Caco-2 (cell line): ENCODE measurements at regions of chr22 and their contacts with region 1.

Region 1: GRCh38 chr22:45192701-45193187 is 29.0 kb downstream of the NUP50 start:
- DNase-seq: peak in 1 of 2 experiments; percentile 64
- H3K4me3 ChIP-seq: no peak overlapping the region
- H3K4me3 Mint-ChIP-seq: no peak overlapping the region
- H3K27ac Mint-ChIP-seq: no peak overlapping the region
- H3K4me1 ChIP-seq: peaks cover 12% of the 10 kb centered on the region
- H3K4me1 Mint-ChIP-seq: peaks cover 18% of the 10 kb centered on the region
- H3K27me3 ChIP-seq: no peaks in the 10 kb centered on the region
- H3K27me3 Mint-ChIP-seq: no peaks in the 10 kb centered on the region
- CTCF ChIP-seq: peak in 1 of 2 experiments; percentile 42

Region 2: DNA sequence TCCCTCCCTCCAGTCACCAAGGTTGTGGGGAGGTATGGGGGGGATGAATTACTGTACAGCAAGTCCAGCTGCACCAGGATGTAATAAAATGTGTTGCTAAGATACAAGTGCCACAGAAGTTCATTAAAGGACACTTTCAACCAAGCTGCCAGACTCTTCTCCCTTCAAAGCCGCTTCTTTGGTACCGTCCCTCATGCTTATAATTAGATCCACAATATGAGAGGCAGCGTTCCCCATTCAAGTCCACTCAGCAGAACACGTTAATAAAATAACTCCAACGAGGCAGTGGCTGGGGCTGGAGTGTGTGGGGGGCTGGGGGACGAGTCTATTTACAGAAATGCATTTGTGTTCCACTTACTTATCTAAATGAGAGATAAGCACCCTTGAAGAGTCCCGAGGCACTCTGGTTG is 197.6 kb before region 1 on chr22:
- CTCF ChIA-PET with region 1: no interaction called
- POLR2A ChIA-PET with region 1: no interaction called
- intact Hi-C with region 1: no loop called
- DNase-seq: no peak
- H3K4me3 ChIP-seq: no peak overlapping the region
- H3K4me3 Mint-ChIP-seq: no peak overlapping the region
- H3K27ac Mint-ChIP-seq: no peak overlapping the region
- H3K4me1 ChIP-seq: no peaks in the 10 kb centered on the region
- H3K4me1 Mint-ChIP-seq: no peaks in the 10 kb centered on the region
- H3K27me3 ChIP-seq: peaks cover 4% of the 10 kb centered on the region
- H3K27me3 Mint-ChIP-seq: peaks cover 38% of the 10 kb centered on the region
- CTCF ChIP-seq: no peak

Region 3: DNA sequence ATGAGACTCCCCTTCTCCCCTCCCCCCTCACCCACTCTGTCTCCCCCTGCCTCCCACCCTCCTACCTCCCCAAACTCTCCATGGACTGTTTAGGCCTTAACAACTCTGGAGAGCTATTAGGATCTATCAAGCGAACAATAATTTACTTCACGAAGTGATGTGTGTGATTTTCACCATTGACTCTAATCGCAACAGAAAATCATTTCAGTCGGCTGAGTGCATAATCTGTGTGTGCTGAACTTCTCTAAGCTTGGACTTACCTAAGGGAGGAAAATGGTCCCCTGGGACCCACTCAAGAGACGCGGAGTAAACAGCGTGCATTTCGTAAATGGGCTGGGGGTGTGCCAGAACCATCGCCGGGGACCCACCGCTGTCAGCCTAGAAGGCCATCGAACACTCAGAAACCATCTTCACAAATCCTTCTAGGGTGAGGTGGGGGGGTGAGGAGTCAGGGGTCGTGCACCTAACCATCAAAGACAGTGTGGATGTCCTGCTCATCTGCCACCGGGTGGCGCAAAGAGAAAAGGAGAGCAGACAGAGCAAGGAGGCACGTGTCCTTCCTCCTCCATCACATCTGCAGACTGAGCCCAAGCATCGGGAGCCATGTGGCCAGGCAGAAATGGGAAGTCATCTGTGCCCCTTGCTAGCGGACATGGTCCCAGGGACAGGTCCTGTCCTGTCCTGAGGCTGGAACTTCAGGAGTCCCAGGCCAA is 91.1 kb before region 1 on chr22:
- CTCF ChIA-PET with region 1: no interaction called
- POLR2A ChIA-PET with region 1: no interaction called
- intact Hi-C with region 1: loop called (anchors 10 kb)
- DNase-seq: peak; percentile 75
- H3K4me3 ChIP-seq: no peak overlapping the region
- H3K4me3 Mint-ChIP-seq: no peak overlapping the region
- H3K27ac Mint-ChIP-seq: no peak overlapping the region
- H3K4me1 ChIP-seq: no peaks in the 10 kb centered on the region
- H3K4me1 Mint-ChIP-seq: peaks cover 15% of the 10 kb centered on the region
- H3K27me3 ChIP-seq: no peaks in the 10 kb centered on the region
- H3K27me3 Mint-ChIP-seq: no peaks in the 10 kb centered on the region
- CTCF ChIP-seq: peak; percentile 63 to 73

Region 4: DNA sequence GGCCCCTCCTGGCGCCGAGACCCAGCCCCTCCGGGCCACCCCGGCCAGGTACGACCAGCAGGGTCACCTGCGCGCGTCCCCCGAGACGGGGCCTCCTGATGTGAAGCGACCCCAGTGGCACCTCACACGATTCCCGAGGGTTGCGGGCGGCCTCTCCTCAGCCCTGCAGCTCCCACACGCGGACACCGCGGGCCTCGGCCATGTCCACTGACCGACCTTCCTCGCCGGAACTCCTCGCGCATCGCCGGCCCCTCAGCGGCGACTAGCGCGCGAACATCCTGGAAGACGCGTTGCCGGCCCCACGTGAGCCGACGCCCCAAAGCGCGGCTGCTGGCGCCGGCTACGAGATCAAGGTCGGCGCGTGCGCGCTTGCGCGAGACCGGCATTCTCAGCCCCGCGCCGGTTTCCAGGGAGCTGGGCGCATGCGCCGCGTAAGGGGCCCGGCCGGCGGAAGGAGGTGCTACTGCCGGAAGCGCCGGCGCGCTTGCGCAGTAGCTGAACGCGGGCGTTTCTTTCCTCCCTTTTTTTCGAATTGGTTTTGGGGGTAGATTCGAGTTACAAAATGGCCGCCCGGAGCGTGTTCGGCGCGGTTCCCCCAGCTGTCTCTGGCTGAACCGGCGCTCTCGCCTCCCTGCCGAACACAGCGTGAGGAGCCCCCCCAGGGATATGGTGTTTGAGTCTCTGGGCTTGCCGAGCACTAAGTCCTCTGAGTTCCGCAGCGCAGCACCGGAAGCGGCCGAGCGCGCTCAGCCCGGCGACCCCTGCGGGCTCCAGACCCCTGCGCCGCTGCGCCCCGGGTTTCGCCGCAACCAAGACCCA is 29.1 kb before region 1 on chr22 and contains the start of gene NUP50:
- CTCF ChIA-PET with region 1: interaction called, 3 read pairs
- POLR2A ChIA-PET with region 1: interaction called, 10 read pairs
- intact Hi-C with region 1: no loop called
- DNase-seq: peak; percentile 95 to 98
- H3K4me3 ChIP-seq: peak within 1 kb of the TSS; percentile 78
- H3K4me3 Mint-ChIP-seq: peak within 1 kb of the TSS; percentile 100
- H3K27ac Mint-ChIP-seq: peak within 1 kb of the TSS; percentile 97
- H3K4me1 ChIP-seq: peaks cover 47% of the 10 kb centered on the region
- H3K4me1 Mint-ChIP-seq: peaks cover 38% of the 10 kb centered on the region
- H3K27me3 ChIP-seq: no peaks in the 10 kb centered on the region
- H3K27me3 Mint-ChIP-seq: no peaks in the 10 kb centered on the region
- CTCF ChIP-seq: no peak
- total RNA-seq, gene NUP50: 122 and 128 TPM in 2 replicates

Region 5: DNA sequence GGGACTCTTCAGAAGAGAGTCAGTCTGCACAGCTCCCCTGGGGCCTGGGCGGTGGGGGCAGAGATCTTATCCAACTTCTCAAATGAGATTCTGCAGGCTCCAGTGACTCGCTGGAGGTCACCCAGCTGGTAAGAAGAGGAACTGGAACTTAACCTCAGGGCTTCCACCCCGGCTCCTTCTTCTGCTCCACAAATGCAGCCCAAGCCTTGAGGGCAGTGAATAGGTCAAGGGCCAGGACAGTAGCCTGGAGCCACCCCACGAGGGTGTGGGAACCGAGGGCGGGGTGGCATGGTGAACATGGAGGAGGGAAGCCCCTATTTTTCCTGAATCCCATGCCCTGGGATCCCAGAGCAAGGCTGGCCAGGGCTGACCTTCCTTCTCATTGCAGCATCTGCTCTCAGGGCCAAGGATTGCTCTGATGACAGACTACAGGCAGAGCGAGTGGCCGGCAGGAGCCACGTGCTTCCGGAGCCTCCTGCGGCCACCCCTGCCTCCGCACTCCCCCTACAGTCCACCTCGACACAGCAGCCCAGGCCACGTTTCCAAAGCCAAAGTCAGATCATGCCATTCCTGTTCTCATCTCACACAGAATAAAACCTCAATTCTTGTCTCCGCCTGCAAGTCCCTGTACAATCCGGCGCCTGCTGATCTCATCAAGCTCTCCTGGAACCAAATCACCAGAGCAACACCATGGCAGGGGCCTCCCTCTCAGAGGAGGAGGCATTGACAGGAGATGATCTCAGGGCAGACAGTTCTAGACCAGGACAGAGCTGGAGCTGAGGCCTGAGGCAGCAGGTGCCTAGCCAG is 70.9 kb after region 1 on chr22:
- CTCF ChIA-PET with region 1: no interaction called
- POLR2A ChIA-PET with region 1: no interaction called
- intact Hi-C with region 1: loop called (anchors 1 kb)
- DNase-seq: peak; percentile 84 to 85
- H3K4me3 ChIP-seq: no peak overlapping the region
- H3K4me3 Mint-ChIP-seq: no peak overlapping the region
- H3K27ac Mint-ChIP-seq: peak overlapping the region; percentile 33
- H3K4me1 ChIP-seq: peaks cover 12% of the 10 kb centered on the region
- H3K4me1 Mint-ChIP-seq: peaks cover 9% of the 10 kb centered on the region
- H3K27me3 ChIP-seq: no peaks in the 10 kb centered on the region
- H3K27me3 Mint-ChIP-seq: no peaks in the 10 kb centered on the region
- CTCF ChIP-seq: peak; percentile 79 to 96